Aorta (tissue), 5 donors: ENCODE measurements at regions of chr13 and their contacts with region 1.

Region 1: DNA sequence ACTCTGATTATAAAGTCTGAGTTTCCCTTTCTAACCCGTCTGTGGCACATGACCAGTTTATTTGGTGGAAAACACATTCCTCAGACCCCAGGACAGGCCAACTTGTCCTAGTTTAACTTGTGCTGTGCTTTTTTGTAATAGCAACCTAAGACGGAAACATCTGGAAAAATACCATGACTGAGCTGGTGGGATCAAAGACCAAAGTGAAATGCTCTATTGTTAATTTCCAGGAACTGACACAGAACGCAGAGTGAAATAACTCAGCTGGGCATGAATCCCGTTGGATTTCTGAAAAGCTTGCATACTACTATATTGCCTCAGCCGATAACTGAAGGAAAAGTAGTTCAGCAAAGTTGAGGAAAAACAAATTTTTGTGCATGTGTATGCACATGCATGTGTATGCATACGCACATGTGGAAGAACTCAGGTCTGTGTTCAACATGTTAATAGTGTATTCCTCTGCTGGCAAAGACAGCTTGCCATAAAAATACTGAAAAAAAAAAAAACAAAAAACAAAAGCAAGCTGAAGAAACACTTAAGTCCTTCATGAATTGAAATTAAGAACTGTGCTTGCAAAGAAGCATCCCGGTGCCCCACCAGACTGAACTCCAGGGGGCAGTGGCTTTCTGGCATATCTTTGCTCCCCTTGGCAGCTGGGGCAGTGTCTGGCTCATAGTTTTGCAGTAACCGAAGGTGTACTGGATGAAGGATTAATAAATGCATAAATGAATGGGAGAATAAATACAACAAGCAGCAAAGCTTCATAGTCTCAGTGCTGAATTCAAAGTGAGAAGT is 187.8 kb downstream of the LHFPL6 start:
- DNase-seq: peak in 1 of 2 donors; percentile 54
- ATAC-seq: peak; percentile 49
- H3K4me3 ChIP-seq: peak overlapping the region in 1 of 2 donors; percentile 14
- H3K27ac ChIP-seq: peak overlapping the region; percentile 22 to 28
- H3K4me1 ChIP-seq: peaks cover 0 to 2% of the 10 kb centered on the region in 2 donors
- H3K27me3 ChIP-seq: no peaks in the 10 kb centered on the region

Region 2: GRCh38 chr13:39144941-39145533 is 270.2 kb before region 1 on chr13:
- intact Hi-C with region 1: loop called in 1 of 2 experiments (anchors 10 kb)
- DNase-seq: peak; percentile 51 to 75
- ATAC-seq: peak; percentile 88
- H3K4me3 ChIP-seq: peak overlapping the region in 1 of 2 donors; percentile 31
- H3K27ac ChIP-seq: no peak overlapping the region
- H3K4me1 ChIP-seq: no peaks in the 10 kb centered on the region
- H3K27me3 ChIP-seq: no peaks in the 10 kb centered on the region

Region 3: GRCh38 chr13:39510316-39510695 is 95.1 kb after region 1 on chr13:
- intact Hi-C with region 1: loop called (anchors 10 kb)
- DNase-seq: no peak
- ATAC-seq: no peak
- H3K4me3 ChIP-seq: no peak overlapping the region
- H3K27ac ChIP-seq: no peak overlapping the region
- H3K4me1 ChIP-seq: peaks cover under 1 to 3% of the 10 kb centered on the region in 2 donors
- H3K27me3 ChIP-seq: no peaks in the 10 kb centered on the region

Region 4: GRCh38 chr13:40629678-40630384 is 1214.6 kb after region 1 on chr13:
- intact Hi-C with region 1: no loop called
- DNase-seq: no peak
- ATAC-seq: no peak
- H3K4me3 ChIP-seq: no peak overlapping the region
- H3K27ac ChIP-seq: no peak overlapping the region
- H3K4me1 ChIP-seq: peaks cover 0 to 9% of the 10 kb centered on the region in 2 donors
- H3K27me3 ChIP-seq: no peaks in the 10 kb centered on the region